GM13976 (cell line): ENCODE measurements at regions of chr21 and their contacts with region 1.

Region 1: DNA sequence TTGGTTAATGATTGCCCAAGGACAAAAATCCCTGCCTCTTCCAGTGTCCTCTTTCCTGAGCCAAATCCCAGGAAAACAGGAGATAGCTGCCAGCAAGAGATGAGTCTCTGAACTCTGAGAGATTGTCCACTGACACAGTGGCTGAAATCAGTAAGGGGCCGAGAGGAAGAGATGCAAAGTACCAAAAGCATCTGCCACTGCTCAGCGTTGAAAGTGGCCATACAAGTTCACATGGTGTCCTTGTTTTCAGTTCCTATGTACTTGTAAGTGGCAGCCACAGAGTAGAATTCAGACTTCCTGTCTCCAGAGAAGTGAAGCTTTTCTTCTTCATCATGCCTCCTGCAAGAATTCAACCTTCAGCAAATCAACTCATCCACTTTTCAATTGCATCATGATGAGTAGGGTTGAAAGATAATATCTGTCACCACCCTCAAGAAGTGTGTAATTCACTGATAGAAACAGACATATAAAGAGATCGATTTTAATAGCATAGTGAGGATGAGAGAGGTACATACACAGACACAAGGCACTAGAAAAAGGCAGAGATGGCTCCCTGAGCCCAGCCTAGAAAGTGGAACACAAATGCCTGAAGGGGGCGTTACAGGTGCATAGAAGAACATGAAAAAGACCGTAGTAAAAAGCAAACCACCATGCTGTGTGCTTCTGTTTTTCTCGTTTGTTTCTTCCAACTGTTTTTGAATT is 185.8 kb downstream of the MRPL39 start:
- DNase-seq: no peak
- CTCF ChIP-seq: peak; percentile 52

Region 2: GRCh38 chr21:25464275-25464674 is 42.8 kb after region 1 on chr21:
- in situ Hi-C with region 1: loop called (anchors 5 kb)
- DNase-seq: no peak
- CTCF ChIP-seq: no peak

Region 3: GRCh38 chr21:25501996-25502665 is 80.7 kb after region 1 on chr21:
- in situ Hi-C with region 1: loop called (anchors 10 kb)
- DNase-seq: no peak
- CTCF ChIP-seq: no peak

Region 4: GRCh38 chr21:25515484-25516405 is 94.3 kb after region 1 on chr21:
- in situ Hi-C with region 1: no loop called
- DNase-seq: no peak
- CTCF ChIP-seq: no peak

Region 5: DNA sequence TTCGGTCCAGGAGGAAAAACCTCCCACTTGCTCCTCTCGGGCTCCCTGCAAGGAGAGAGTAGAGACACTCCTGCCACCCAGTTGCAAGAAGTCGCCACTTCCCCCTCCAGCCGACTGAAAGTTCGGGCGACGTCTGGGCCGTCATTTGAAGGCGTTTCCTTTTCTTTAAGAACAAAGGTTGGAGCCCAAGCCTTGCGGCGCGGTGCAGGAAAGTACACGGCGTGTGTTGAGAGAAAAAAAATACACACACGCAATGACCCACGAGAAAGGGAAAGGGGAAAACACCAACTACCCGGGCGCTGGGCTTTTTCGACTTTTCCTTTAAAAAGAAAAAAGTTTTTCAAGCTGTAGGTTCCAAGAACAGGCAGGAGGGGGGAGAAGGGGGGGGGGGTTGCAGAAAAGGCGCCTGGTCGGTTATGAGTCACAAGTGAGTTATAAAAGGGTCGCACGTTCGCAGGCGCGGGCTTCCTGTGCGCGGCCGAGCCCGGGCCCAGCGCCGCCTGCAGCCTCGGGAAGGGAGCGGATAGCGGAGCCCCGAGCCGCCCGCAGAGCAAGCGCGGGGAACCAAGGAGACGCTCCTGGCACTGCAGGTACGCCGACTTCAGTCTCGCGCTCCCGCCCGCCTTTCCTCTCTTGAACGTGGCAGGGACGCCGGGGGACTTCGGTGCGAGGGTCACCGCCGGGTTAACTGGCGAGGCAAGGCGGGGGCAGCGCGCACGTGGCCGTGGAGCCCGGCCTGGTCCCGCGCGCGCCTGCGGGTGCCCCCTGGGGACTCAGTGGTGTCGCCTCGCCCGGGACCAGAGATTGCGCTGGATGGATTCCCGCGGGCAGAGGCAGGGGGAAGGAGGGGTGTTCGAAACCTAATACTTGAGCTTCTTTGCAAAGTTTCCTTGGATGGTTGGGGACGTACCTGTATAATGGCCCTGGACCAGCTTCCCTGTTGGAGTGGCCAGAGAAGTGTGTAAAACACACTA is 140.5 kb after region 1 on chr21:
- in situ Hi-C with region 1: loop called (anchors 5 kb)
- DNase-seq: peak; percentile 70
- CTCF ChIP-seq: peak; percentile 31